CD4-positive, alpha-beta T cell (primary cell): ENCODE measurements at regions of chr1 and their contacts with region 1.

Region 1: GRCh38 chr1:199243423-199244061 is 604.7 kb downstream of the PTPRC start:
- DNase-seq: peak; percentile 37 to 79 (median 53)
- ATAC-seq: peak; percentile 95
- H3K4me3 ChIP-seq: no peak overlapping the region
- H3K4me3 Mint-ChIP-seq: no peak overlapping the region
- H3K27ac ChIP-seq: no peak overlapping the region
- H3K27ac Mint-ChIP-seq: no peak overlapping the region
- H3K4me1 ChIP-seq: peaks cover 4% of the 10 kb centered on the region
- H3K4me1 Mint-ChIP-seq: no peaks in the 10 kb centered on the region
- H3K27me3 ChIP-seq: no peaks in the 10 kb centered on the region
- H3K27me3 Mint-ChIP-seq: no peaks in the 10 kb centered on the region
- CTCF ChIP-seq: peak; percentile 63

Region 2: DNA sequence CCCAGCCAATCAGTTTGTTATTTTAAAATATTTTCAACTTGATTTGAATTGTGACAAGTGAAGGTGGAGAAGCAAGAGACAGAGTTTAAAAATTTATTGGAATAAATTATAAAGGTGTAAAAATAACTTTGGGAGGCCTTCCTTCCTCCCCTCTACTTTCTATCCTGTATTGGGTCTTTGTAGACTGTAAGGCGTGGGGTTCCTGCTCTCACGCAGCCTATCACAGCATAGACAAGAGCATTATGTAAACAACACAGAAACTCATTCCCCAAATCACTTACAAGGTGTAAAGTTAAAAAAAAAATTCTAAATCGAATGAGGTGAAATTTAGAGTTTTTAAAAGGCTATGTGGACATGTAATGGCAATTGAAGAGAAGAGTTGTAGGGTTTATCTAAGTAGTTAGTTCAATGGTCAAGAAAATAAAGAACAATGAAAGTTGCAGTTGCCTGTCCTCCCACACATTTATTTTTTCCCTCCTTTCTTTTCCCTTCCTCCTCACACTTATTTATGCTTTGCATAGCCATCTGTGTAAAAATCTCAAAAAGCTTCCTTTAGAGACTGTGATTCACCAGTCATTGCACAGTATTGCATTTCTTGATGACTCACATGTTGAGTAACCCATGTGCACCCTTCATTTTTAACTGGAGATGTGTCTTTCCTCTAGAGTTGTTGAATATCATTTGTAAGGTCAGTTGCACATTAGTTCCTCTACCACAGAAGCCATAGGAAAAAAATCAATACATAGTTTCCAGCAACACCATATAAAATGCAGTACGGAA is 362.5 kb before region 1 on chr1:
- CTCF ChIA-PET with region 1: no interaction called
- POLR2A ChIA-PET with region 1: no interaction called
- intact Hi-C with region 1: loop called in 1 of 2 experiments (anchors 10 kb)
- DNase-seq: peak in 3 of 14 experiments; percentile 2 to 56 (median 48)
- ATAC-seq: no peak
- H3K4me3 ChIP-seq: no peak overlapping the region
- H3K4me3 Mint-ChIP-seq: no peak overlapping the region
- H3K27ac ChIP-seq: no peak overlapping the region
- H3K27ac Mint-ChIP-seq: no peak overlapping the region
- H3K4me1 ChIP-seq: no peaks in the 10 kb centered on the region
- H3K4me1 Mint-ChIP-seq: peaks cover 11% of the 10 kb centered on the region
- H3K27me3 ChIP-seq: no peaks in the 10 kb centered on the region
- H3K27me3 Mint-ChIP-seq: no peaks in the 10 kb centered on the region
- CTCF ChIP-seq: no peak

Region 3: GRCh38 chr1:198922638-198923430 is 320.7 kb before region 1 on chr1:
- CTCF ChIA-PET with region 1: no interaction called
- POLR2A ChIA-PET with region 1: no interaction called
- intact Hi-C with region 1: no loop called
- DNase-seq: peak in 3 of 14 experiments; percentile 35 to 60 (median 49)
- ATAC-seq: no peak
- H3K4me3 ChIP-seq: no peak overlapping the region
- H3K4me3 Mint-ChIP-seq: peak overlapping the region; percentile 31
- H3K27ac ChIP-seq: peak overlapping the region in 1 of 2 donors; percentile 26
- H3K27ac Mint-ChIP-seq: peak overlapping the region; percentile 28
- H3K4me1 ChIP-seq: peaks cover 10% of the 10 kb centered on the region
- H3K4me1 Mint-ChIP-seq: peaks cover 84% of the 10 kb centered on the region
- H3K27me3 ChIP-seq: no peaks in the 10 kb centered on the region
- H3K27me3 Mint-ChIP-seq: no peaks in the 10 kb centered on the region
- CTCF ChIP-seq: no peak